Tibial artery (tissue), 4 donors: ENCODE measurements at regions of chr9 and their contacts with region 1.

Region 1: GRCh38 chr9:75834878-75835277 is 55.6 kb upstream of the PCSK5 start:
- DNase-seq: no peak
- H3K4me3 ChIP-seq: no peak overlapping the region
- H3K27ac ChIP-seq: no peak overlapping the region
- H3K4me1 ChIP-seq: peaks cover 0 to 3% (median 1%) of the 10 kb centered on the region in 4 donors
- H3K27me3 ChIP-seq: no peaks in the 10 kb centered on the region
- CTCF ChIP-seq: no peak

Region 2: DNA sequence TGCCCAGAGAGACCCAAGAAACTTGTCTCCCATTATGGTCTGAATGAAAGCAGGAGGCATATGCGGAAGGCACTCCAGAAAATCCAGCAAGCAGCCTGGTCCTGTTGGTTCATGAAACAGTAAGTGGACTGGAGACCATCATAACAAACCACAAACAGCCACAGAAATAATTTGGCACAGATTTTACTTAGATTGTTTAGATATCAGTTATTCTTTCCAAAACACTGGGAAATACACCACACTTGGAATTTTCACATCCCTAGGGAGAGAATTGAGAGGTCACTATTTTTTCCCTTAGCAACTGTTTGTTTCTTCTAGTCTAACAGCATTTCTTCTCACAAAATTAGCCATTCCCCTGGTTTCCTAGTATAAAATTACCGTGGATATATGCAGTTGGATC is 445.8 kb before region 1 on chr9:
- intact Hi-C with region 1: no loop called
- DNase-seq: no peak
- H3K4me3 ChIP-seq: no peak overlapping the region
- H3K27ac ChIP-seq: peak overlapping the region; percentile 3 to 40
- H3K4me1 ChIP-seq: peaks cover 0 to 28% (median 12%) of the 10 kb centered on the region in 4 donors
- H3K27me3 ChIP-seq: no peaks in the 10 kb centered on the region
- CTCF ChIP-seq: no peak

Region 3: DNA sequence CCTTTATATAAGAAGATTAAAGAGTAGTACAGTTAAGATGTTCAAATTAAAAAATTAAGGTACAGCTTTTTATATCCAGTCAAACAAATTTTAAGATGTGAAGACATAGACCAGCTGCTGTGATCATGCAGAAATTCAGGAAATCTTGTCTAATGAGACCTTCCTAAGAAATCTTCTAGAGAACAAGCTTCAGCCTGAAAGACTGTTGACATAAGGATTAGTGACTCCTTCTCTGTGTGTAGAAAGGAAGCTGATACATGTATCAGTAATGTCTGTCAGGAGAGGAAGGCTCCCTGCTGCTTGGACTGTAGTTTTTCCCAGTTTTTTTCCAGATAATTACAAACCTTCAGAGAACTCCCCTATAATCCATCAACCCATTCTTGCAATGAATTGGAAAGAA is 20.2 kb before region 1 on chr9:
- intact Hi-C with region 1: loop called (anchors 1 kb)
- DNase-seq: no peak
- H3K4me3 ChIP-seq: no peak overlapping the region
- H3K27ac ChIP-seq: no peak overlapping the region
- H3K4me1 ChIP-seq: peaks cover 0 to 11% (median 3%) of the 10 kb centered on the region in 4 donors
- H3K27me3 ChIP-seq: no peaks in the 10 kb centered on the region
- CTCF ChIP-seq: no peak

Region 4: DNA sequence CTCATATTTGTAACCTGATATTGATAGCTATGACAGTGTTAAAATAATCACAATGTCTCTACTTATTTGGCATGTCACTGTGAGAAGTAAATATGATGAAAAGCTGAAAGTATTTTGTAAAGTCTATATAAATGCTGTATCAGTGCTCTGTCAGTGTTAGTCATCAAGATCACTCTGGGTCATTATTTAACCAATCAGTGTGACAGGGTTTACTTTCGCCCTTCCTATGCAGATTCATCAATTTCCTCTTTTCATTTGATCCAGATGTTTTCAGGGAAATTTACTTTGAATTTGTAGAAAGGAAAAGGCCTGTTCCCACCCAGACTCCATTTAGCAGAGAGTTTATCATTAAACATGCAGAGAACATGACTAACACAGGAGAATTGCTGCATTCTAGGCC is 45.7 kb after region 1 on chr9:
- intact Hi-C with region 1: no loop called
- DNase-seq: no peak
- H3K4me3 ChIP-seq: no peak overlapping the region
- H3K27ac ChIP-seq: no peak overlapping the region
- H3K4me1 ChIP-seq: no peaks in the 10 kb centered on the region
- H3K27me3 ChIP-seq: no peaks in the 10 kb centered on the region
- CTCF ChIP-seq: no peak

Region 5: GRCh38 chr9:76067696-76068095 is 232.8 kb after region 1 on chr9:
- intact Hi-C with region 1: no loop called
- DNase-seq: no peak
- H3K4me3 ChIP-seq: no peak overlapping the region
- H3K27ac ChIP-seq: no peak overlapping the region
- H3K4me1 ChIP-seq: no peaks in the 10 kb centered on the region
- H3K27me3 ChIP-seq: no peaks in the 10 kb centered on the region
- CTCF ChIP-seq: no peak

Region 6: GRCh38 chr9:76271755-76272154 is 436.9 kb after region 1 on chr9:
- intact Hi-C with region 1: no loop called
- DNase-seq: no peak
- H3K4me3 ChIP-seq: no peak overlapping the region
- H3K27ac ChIP-seq: no peak overlapping the region
- H3K4me1 ChIP-seq: peaks cover 0 to 12% (median 3%) of the 10 kb centered on the region in 4 donors
- H3K27me3 ChIP-seq: no peaks in the 10 kb centered on the region
- CTCF ChIP-seq: no peak